CD8-positive, alpha-beta memory T cell (primary cell): ENCODE measurements at regions of chr15 and their contacts with region 1.

Region 1: GRCh38 chr15:69058830-69059556 is 44.5 kb downstream of the NOX5 start:
- DNase-seq: peak; percentile 44 to 76 (median 53)
- H3K4me3 ChIP-seq: no peak overlapping the region
- H3K4me3 Mint-ChIP-seq: peak overlapping the region in 1 of 7 donors; percentile 52
- H3K27ac ChIP-seq: no peak overlapping the region
- H3K27ac Mint-ChIP-seq: peak overlapping the region in 2 of 8 donors; percentile 37 to 72
- H3K4me1 ChIP-seq: peaks cover 22% of the 10 kb centered on the region
- H3K4me1 Mint-ChIP-seq: peaks cover 13 to 28% (median 26%) of the 10 kb centered on the region in 3 donors
- H3K27me3 ChIP-seq: no peaks in the 10 kb centered on the region
- H3K27me3 Mint-ChIP-seq: peaks cover 0 to 25% of the 10 kb centered on the region in 2 donors

Region 2: GRCh38 chr15:68991723-68992122 is 67.3 kb before region 1 on chr15:
- CTCF ChIA-PET with region 1: no interaction called
- POLR2A ChIA-PET with region 1: no interaction called
- DNase-seq: no peak
- H3K4me3 ChIP-seq: no peak overlapping the region
- H3K4me3 Mint-ChIP-seq: no peak overlapping the region
- H3K27ac ChIP-seq: no peak overlapping the region
- H3K27ac Mint-ChIP-seq: no peak overlapping the region
- H3K4me1 ChIP-seq: no peaks in the 10 kb centered on the region
- H3K4me1 Mint-ChIP-seq: no peaks in the 10 kb centered on the region
- H3K27me3 ChIP-seq: no peaks in the 10 kb centered on the region
- H3K27me3 Mint-ChIP-seq: peaks cover 3 to 21% of the 10 kb centered on the region in 2 donors

Region 3: GRCh38 chr15:69394556-69395282 is 335.7 kb after region 1 on chr15:
- CTCF ChIA-PET with region 1: interaction called, 19 read pairs
- POLR2A ChIA-PET with region 1: no interaction called
- DNase-seq: peak; percentile 62 to 82 (median 69)
- H3K4me3 ChIP-seq: no peak overlapping the region
- H3K4me3 Mint-ChIP-seq: peak overlapping the region in 1 of 7 donors; percentile 52
- H3K27ac ChIP-seq: no peak overlapping the region
- H3K27ac Mint-ChIP-seq: peak overlapping the region in 2 of 8 donors; percentile 66 to 69
- H3K4me1 ChIP-seq: peaks cover 5% of the 10 kb centered on the region
- H3K4me1 Mint-ChIP-seq: peaks cover 4 to 13% (median 7%) of the 10 kb centered on the region in 3 donors
- H3K27me3 ChIP-seq: no peaks in the 10 kb centered on the region
- H3K27me3 Mint-ChIP-seq: peaks cover 3 to 8% of the 10 kb centered on the region in 2 donors